HEK293T (cell line): ENCODE measurements at regions of chr5 and their contacts with region 1.

Region 1: GRCh38 chr5:55936100-55936693 is 58.6 kb downstream of the IL6ST start:
- DNase-seq: peak; percentile 73

Region 2: GRCh38 chr5:55742778-55743177 is 193.4 kb before region 1 on chr5:
- CTCF ChIA-PET with region 1: no interaction called
- POLR2A ChIA-PET with region 1: no interaction called
- DNase-seq: no peak

Region 3: DNA sequence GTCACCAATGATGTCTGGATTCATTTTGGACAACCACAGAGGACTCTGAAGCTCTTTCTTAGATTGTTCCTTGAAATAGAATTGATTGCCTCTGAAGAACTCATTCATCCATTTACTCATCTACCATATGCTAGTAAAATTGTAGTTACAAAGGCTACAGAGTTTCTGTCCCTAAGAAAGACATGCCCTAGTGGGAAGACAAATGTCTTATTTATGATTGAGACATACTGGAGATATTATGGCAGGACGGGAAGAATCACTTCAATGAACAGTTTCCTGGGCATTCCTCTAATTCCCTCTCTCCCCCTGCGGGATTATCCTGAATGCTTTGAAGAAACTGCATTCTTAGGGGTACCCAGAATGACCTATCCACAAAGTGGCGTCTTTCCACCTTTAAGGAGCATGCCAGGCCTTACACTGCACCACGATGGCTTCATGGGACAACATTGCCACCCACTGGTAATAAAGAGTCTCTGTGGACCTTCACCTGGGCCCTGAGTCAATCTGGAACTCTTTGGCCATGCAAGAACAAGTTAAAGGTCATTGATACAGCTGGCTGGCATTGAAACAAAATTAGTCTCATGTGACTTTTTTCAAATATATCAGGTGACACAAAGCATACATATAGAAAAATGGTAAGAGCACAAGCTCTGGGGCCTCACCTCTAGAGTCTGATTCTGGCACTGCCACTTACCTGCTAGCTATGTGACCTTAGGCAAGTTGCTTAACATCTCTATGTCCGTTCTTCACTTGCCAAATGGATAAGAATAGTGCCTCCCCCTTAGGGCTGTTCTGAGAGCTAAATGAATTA is 264.9 kb after region 1 on chr5:
- CTCF ChIA-PET with region 1: interaction called, 24 read pairs
- POLR2A ChIA-PET with region 1: no interaction called
- DNase-seq: peak; percentile 65